Activated naive CD4-positive, alpha-beta T cell treated with anti-CD3 and anti-CD28 coated beads for 36 hours (primary cell): ENCODE measurements at regions of chr3 and their contacts with region 1.

Region 1: GRCh38 chr3:184229394-184230080 is at the start of gene VWA5B2:
- DNase-seq: peak; percentile 41
- H3K4me3 Mint-ChIP-seq: peak within 1 kb of the TSS; percentile 52
- H3K27ac Mint-ChIP-seq: no peak within 1 kb of the TSS
- H3K4me1 Mint-ChIP-seq: peaks cover 11% of the 10 kb centered on the region
- H3K27me3 Mint-ChIP-seq: peaks cover 50% of the 10 kb centered on the region
- total RNA-seq, gene VWA5B2: not detected

Region 2: GRCh38 chr3:184145111-184145524 is 84.4 kb before region 1 on chr3:
- CTCF ChIA-PET with region 1: interaction called, 12 read pairs
- intact Hi-C with region 1: no loop called
- DNase-seq: peak; percentile 55
- H3K4me3 Mint-ChIP-seq: no peak overlapping the region
- H3K27ac Mint-ChIP-seq: no peak overlapping the region
- H3K4me1 Mint-ChIP-seq: peaks cover 2% of the 10 kb centered on the region
- H3K27me3 Mint-ChIP-seq: no peaks in the 10 kb centered on the region

Region 3: DNA sequence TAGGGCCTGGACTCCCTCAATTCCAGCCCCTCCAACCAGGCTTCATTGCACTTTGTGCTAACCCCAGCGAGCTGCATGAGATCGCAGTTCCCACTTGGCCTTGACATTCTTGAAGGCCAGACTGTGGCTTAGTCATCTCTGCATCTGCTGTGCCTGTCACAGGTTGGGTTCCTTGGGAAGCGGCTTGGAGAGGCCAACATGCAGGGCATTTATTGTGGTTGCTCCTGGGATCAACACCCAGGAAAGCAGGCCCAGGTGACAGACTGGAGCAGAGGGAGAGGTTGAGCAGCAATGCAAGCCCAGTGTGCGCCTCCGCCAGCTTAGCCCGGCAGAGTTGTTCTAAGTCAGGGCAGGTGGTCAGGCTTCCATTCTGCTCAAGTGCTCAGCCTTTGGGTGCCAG is 33.0 kb before region 1 on chr3:
- CTCF ChIA-PET with region 1: interaction called, 23 read pairs
- intact Hi-C with region 1: no loop called
- DNase-seq: no peak
- H3K4me3 Mint-ChIP-seq: no peak overlapping the region
- H3K27ac Mint-ChIP-seq: no peak overlapping the region
- H3K4me1 Mint-ChIP-seq: no peaks in the 10 kb centered on the region
- H3K27me3 Mint-ChIP-seq: no peaks in the 10 kb centered on the region

Region 4: GRCh38 chr3:184218814-184219213 is 10.7 kb before region 1 on chr3:
- CTCF ChIA-PET with region 1: interaction called, 12 read pairs
- intact Hi-C with region 1: no loop called
- DNase-seq: no peak
- H3K4me3 Mint-ChIP-seq: no peak overlapping the region
- H3K27ac Mint-ChIP-seq: no peak overlapping the region
- H3K4me1 Mint-ChIP-seq: no peaks in the 10 kb centered on the region
- H3K27me3 Mint-ChIP-seq: peaks cover 10% of the 10 kb centered on the region

Region 5: GRCh38 chr3:184261270-184261853 is 31.8 kb after region 1 on chr3 and contains the start of gene CAMK2N2:
- CTCF ChIA-PET with region 1: interaction called, 10 read pairs
- intact Hi-C with region 1: loop called (anchors 5 kb)
- DNase-seq: peak; percentile 57
- H3K4me3 Mint-ChIP-seq: peak within 1 kb of the TSS; percentile 75
- H3K27ac Mint-ChIP-seq: no peak within 1 kb of the TSS
- H3K4me1 Mint-ChIP-seq: peaks cover 18% of the 10 kb centered on the region
- H3K27me3 Mint-ChIP-seq: peaks cover 33% of the 10 kb centered on the region
- total RNA-seq, gene CAMK2N2: not detected

Region 6: DNA sequence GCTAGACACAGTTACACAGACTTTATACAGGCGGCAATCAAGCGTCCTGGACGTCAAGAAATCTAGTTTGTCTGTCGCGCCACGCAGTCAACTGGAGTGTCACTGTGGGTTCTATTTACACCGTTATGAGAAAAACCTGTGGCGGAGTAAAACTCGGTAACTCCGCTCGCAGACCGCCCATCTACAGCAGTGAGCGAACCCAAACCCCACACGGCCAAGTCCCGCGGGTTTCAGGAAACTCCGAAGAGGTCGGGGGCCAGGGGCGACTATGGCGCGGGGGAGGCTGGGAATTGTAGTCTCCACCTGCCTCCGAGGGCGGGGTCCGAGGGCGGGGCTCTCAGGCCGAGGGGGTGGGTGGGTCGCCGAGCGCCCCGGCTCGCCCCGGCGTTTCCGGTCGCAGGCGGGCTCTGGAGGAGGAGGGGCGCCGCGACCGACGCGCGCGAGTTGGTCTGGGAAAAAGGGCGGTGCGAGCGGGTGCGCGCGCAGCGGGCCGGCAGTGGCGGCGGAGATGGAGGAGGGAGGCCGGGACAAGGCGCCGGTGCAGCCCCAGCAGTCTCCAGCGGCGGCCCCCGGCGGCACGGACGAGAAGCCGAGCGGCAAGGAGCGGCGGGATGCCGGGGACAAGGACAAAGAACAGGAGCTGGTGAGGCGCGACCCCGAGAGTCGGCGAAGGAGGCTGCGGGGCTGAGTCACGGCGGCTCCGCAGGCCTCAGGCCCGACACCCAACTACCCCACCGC is 69.4 kb after region 1 on chr3 and contains the start of gene PSMD2:
- CTCF ChIA-PET with region 1: interaction called, 16 read pairs
- intact Hi-C with region 1: no loop called
- DNase-seq: peak; percentile 99
- H3K4me3 Mint-ChIP-seq: peak within 1 kb of the TSS; percentile 98
- H3K27ac Mint-ChIP-seq: peak within 1 kb of the TSS; percentile 87
- H3K4me1 Mint-ChIP-seq: peaks cover 21% of the 10 kb centered on the region
- H3K27me3 Mint-ChIP-seq: no peaks in the 10 kb centered on the region
- total RNA-seq, gene PSMD2: 244 to 257 TPM